Endothelial cell of umbilical vein (primary cell): ENCODE measurements at regions of chr6 and their contacts with region 1.

Region 1: DNA sequence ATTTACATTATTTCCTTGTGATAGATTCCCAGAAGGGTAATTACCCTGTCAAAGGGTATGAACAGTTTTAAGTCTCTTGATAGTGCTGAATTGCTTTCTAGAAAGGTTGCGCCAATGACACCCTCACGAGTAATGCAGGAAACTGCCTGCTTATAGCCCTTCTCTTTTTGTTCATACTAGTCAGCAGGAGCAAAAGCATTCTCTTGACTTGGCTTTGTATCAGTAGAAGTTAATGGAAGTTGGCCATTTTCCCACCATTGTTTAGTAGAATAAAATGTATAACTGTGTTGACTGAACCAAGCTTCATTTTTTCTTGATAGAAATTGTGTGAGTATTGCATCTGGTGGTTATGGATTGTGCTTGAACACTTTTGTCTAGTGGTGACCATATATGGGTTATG is 100.1 kb downstream of the FARS2 start:
- DNase-seq: peak; percentile 96
- H3K4me3 ChIP-seq: no peak overlapping the region
- H3K27ac ChIP-seq: peak overlapping the region; percentile 8
- H3K4me1 ChIP-seq: peaks cover 11% of the 10 kb centered on the region
- H3K27me3 ChIP-seq: no peaks in the 10 kb centered on the region
- CTCF ChIP-seq: no peak
- POLR2A ChIP-seq: no peak

Region 2: DNA sequence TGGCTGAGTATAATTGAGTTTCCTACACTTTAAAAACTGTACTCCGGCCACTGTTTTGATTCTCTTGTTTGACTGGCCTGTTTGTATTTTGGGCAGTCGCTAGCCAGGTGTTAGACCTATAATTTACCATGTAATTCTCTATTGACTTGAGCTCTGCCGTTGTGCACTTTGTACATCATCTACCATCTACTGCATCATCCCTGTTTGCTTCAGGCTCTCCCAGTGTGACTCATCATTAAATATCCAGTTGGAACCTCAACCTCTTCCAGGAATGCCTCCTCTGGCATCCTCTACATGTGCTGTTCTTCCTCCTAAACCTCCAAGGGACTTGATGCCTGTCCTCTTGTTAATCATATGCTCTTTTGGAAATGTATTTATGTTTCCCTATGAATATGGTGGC is 27.7 kb before region 1 on chr6:
- CTCF ChIA-PET with region 1: interaction called, 4 read pairs
- POLR2A ChIA-PET with region 1: no interaction called
- dilution Hi-C with region 1: no loop called
- intact Hi-C with region 1: loop called (anchors 2 kb)
- DNase-seq: no peak
- H3K4me3 ChIP-seq: no peak overlapping the region
- H3K27ac ChIP-seq: peak overlapping the region; percentile 66
- H3K4me1 ChIP-seq: peaks cover 15% of the 10 kb centered on the region
- H3K27me3 ChIP-seq: no peaks in the 10 kb centered on the region
- CTCF ChIP-seq: no peak
- POLR2A ChIP-seq: no peak

Region 3: GRCh38 chr6:6008648-6009421 is 647.4 kb after region 1 on chr6:
- CTCF ChIA-PET with region 1: no interaction called
- POLR2A ChIA-PET with region 1: no interaction called
- dilution Hi-C with region 1: no loop called
- intact Hi-C with region 1: no loop called
- DNase-seq: peak; percentile 86
- H3K4me3 ChIP-seq: peak overlapping the region; percentile 21 to 86 (median 43)
- H3K27ac ChIP-seq: no peak overlapping the region
- H3K4me1 ChIP-seq: peaks cover 21% of the 10 kb centered on the region
- H3K27me3 ChIP-seq: peaks cover 34 to 57% of the 10 kb centered on the region in 2 experiments
- CTCF ChIP-seq: no peak
- POLR2A ChIP-seq: no peak